K562 (cell line): ENCODE measurements at regions of chrX and their contacts with region 1.

Region 1: DNA sequence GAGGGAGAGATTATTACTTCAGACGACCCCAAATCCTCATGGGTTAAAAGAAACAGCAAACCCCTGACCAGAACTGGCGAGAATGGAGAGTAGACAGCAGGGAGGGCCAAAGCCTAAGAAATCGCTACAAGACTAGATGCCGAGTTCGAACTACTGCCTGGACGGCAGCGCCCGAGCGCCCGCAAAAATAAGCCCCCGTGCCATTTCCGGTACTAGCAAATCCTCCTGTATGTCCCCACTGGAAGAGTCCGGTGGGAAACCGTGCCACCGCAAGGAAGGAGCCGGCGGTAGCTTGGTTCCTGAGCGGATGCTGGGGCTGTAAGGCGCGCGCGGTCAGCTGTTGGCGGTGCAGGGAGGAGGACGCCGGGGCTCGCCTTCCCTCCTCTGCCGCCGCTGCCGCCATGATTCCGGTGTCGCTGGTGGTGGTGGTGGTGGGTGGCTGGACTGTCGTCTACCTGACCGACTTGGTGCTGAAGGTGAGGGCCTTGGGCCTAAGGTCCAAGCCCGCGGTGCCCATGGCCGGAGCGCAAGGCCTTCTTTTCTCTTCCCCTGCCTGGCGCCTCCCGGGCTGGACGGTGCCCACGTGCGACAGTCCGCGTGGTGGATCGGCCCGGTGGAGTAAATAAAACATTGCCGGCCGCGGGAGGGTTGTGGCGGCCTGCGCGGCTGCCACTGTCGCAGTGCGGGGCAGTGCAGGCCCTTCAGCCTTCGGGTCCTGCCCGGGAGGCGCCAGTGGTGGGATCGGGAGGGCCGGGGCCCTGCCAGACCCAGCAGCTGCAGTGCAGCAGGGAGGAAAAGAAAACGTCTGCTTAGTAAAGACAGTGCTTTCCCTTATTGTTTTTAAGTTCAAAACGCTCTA is at the start of gene MBTPS2:
- DNase-seq: peak; percentile 56 to 92 (median 62)
- ATAC-seq: peak; percentile 92
- H3K4me3 ChIP-seq: peak within 1 kb of the TSS; percentile 81
- H3K27ac ChIP-seq: peak within 1 kb of the TSS; percentile 70
- H3K4me1 ChIP-seq: no peaks in the 10 kb centered on the region
- H3K27me3 ChIP-seq: no peaks in the 10 kb centered on the region
- CTCF ChIP-seq: peak; percentile 49 to 61 (median 53)
- EP300 ChIP-seq: 0 out of 2 replicates have a peak, but pooled peaks have one; percentile 29
- POLR2A ChIP-seq: peak; percentile 85
- RAD21 ChIP-seq: peak; percentile 53 to 71
- polyA plus RNA-seq, gene MBTPS2: 3.9 to 4.0 TPM

Region 2: DNA sequence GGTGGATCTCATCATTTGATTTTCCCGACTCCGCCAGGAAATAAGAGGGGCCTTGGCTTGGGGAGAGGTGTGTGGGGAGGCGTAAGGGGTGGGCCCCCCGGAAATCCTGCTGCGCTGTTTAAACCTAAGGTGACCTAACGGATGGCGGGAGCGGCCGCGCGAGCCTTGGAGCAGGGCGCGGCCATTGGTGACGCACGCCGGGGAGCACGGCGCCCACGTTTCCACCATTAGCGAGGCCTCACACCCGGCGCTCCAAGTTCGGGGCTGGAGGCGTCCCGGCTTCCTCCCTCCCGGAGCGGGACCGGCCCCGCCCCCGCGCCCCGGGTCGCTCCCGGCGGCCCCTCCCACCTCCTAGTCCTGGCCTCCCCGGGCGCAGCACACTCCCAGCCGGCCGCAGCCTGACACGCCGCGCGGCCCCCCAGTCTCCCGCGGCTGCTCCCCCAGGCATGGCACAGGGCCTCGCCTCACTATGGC is 100.8 kb after region 1 on chrX and contains the start of gene SMS:
- CTCF ChIA-PET with region 1: no interaction called
- POLR2A ChIA-PET with region 1: no interaction called
- in situ Hi-C with region 1: no loop called
- intact Hi-C with region 1: loop called (anchors 5 kb)
- DNase-seq: peak; percentile 85 to 89 (median 87)
- ATAC-seq: peak; percentile 91
- H3K4me3 ChIP-seq: peak within 1 kb of the TSS; percentile 78
- H3K27ac ChIP-seq: peak within 1 kb of the TSS; percentile 80
- H3K4me1 ChIP-seq: peaks cover 8 to 18% of the 10 kb centered on the region in 2 experiments; a peak in 4 of 5 replicates
- H3K27me3 ChIP-seq: no peaks in the 10 kb centered on the region
- CTCF ChIP-seq: no peak
- EP300 ChIP-seq: no peak
- POLR2A ChIP-seq: peak; percentile 75
- RAD21 ChIP-seq: no peak
- polyA plus RNA-seq, gene SMS: 71.1 to 98.5 TPM

Region 3: DNA sequence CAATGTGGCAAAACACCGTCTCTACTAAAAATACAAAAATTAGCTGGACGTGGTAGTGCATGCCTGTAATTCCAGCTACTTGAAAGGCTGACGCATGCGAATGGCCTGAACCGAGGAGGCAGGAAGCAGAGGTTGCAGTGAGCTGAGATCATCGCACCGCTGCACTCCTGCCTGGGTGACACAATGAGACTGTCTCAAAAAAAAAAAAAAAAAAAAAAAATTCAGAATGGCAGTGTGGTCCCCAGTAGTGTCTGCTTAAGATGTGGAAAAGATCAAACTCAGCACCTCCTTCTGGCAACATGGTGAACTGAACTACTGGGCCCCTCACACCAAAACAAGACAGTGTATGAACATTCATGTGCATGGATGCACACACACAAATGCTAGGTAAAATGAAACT is 133.2 kb after region 1 on chrX:
- CTCF ChIA-PET with region 1: interaction called, 8 read pairs
- POLR2A ChIA-PET with region 1: no interaction called
- in situ Hi-C with region 1: no loop called
- intact Hi-C with region 1: loop called (anchors 5 kb)
- DNase-seq: no peak
- ATAC-seq: peak; percentile 83
- H3K4me3 ChIP-seq: no peak overlapping the region
- H3K27ac ChIP-seq: no peak overlapping the region
- H3K4me1 ChIP-seq: peaks cover 0 to 3% of the 10 kb centered on the region in 2 experiments; a peak in 3 of 5 replicates
- H3K27me3 ChIP-seq: no peaks in the 10 kb centered on the region
- CTCF ChIP-seq: peak in 2 of 3 experiments; percentile 16 to 24; a peak in 1 of 6 replicates
- EP300 ChIP-seq: no peak
- POLR2A ChIP-seq: no peak
- RAD21 ChIP-seq: 0 out of 4 replicates have a peak, but pooled peaks of 1 of the 2 experiments have one; percentile 23

Region 4: GRCh38 chrX:22748093-22748999 is 908.8 kb after region 1 on chrX:
- CTCF ChIA-PET with region 1: no interaction called
- POLR2A ChIA-PET with region 1: no interaction called
- in situ Hi-C with region 1: no loop called
- intact Hi-C with region 1: loop called (anchors 10 kb)
- DNase-seq: peak; percentile 10 to 32 (median 20)
- ATAC-seq: peak; percentile 70; the same call in 2 of the 3 replicates
- H3K4me3 ChIP-seq: no peak overlapping the region
- H3K27ac ChIP-seq: no peak overlapping the region
- H3K4me1 ChIP-seq: no peaks in the 10 kb centered on the region
- H3K27me3 ChIP-seq: no peaks in the 10 kb centered on the region
- CTCF ChIP-seq: peak; percentile 21 to 49 (median 26); a peak in 3 of 6 replicates
- EP300 ChIP-seq: no peak
- POLR2A ChIP-seq: no peak
- RAD21 ChIP-seq: peak in 1 of 2 experiments; percentile 37; a peak in 2 of 4 replicates